Activated CD4-positive, alpha-beta memory T cell treated with anti-CD3 and anti-CD28 coated beads for 36 hours (primary cell): ENCODE measurements at regions of chr6 and their contacts with region 1.

Region 1: GRCh38 chr6:31419842-31420241 is 16.4 kb downstream of the MICA start:
- DNase-seq: no peak
- H3K4me3 Mint-ChIP-seq: no peak overlapping the region
- H3K27ac Mint-ChIP-seq: no peak overlapping the region
- H3K4me1 Mint-ChIP-seq: no peaks in the 10 kb centered on the region
- H3K27me3 Mint-ChIP-seq: no peaks in the 10 kb centered on the region

Region 2: DNA sequence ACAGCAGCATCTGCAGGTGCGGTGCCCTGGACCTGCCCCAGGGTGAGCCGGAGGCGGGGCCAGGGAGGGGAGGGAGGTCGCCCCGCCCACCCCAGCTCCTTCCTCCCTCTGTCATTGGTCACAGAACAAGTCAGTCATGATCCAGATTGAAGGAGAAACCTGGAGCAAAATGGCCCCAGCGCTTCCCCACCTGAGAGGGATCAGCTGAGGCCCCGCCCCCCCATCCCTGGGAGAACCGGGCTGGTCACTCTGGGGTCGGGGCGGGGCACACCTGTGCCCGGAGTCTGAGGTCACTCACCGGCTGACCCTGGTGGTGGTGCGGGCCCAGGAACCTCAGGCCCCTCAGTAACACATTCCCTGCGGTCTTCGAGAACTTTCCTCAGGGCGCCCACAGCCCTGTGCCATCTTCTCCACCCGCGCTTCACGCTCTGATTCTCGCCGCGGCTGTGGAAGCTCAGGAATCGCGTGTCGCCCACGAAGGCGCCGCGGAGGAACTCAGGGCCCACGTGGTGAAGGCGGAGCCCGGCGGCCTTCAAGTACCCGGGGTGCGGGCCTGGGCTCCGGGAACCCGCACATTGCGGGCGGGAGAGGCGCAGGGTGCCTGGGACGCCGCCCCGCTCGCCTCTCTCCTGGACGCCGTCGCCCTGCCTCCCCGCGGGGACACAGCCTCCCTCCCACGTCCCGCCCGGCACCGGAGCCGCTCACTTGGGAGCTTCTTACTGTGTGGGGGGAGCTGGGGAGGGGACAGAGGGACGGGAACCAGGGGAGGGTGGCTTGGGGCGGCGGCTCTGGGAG is 111.6 kb before region 1 on chr6:
- CTCF ChIA-PET with region 1: no interaction called
- POLR2A ChIA-PET with region 1: no interaction called
- intact Hi-C with region 1: no loop called
- DNase-seq: peak; percentile 80
- H3K4me3 Mint-ChIP-seq: peak overlapping the region; percentile 72
- H3K27ac Mint-ChIP-seq: no peak overlapping the region
- H3K4me1 Mint-ChIP-seq: no peaks in the 10 kb centered on the region
- H3K27me3 Mint-ChIP-seq: peaks cover 1% of the 10 kb centered on the region

Region 3: GRCh38 chr6:31375699-31376098 is 44.1 kb before region 1 on chr6:
- CTCF ChIA-PET with region 1: no interaction called
- POLR2A ChIA-PET with region 1: no interaction called
- intact Hi-C with region 1: no loop called
- DNase-seq: no peak
- H3K4me3 Mint-ChIP-seq: no peak overlapping the region
- H3K27ac Mint-ChIP-seq: no peak overlapping the region
- H3K4me1 Mint-ChIP-seq: peaks cover 4% of the 10 kb centered on the region
- H3K27me3 Mint-ChIP-seq: peaks cover 12% of the 10 kb centered on the region

Region 4: DNA sequence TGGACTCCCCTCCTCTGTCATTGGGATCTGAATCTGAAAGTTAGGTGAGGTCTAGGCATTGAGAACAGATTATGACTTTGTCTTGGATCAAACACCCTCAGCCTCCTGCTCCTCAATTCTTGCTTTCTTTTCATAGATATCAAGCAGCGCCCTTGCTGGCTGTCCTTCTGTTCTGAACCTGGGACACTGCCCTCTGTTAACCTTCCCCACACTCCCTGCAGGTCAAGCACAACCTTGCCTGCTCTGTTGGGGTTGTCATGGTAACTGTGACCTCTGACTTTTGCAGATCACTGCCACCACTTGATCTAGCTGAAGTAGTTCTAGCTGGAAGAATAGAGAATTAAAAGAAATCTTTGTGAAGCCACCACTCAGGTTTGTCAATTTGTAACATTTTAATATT is 32.9 kb before region 1 on chr6:
- CTCF ChIA-PET with region 1: no interaction called
- POLR2A ChIA-PET with region 1: no interaction called
- intact Hi-C with region 1: no loop called
- DNase-seq: no peak
- H3K4me3 Mint-ChIP-seq: no peak overlapping the region
- H3K27ac Mint-ChIP-seq: no peak overlapping the region
- H3K4me1 Mint-ChIP-seq: no peaks in the 10 kb centered on the region
- H3K27me3 Mint-ChIP-seq: peaks cover under 1% of the 10 kb centered on the region

Region 5: DNA sequence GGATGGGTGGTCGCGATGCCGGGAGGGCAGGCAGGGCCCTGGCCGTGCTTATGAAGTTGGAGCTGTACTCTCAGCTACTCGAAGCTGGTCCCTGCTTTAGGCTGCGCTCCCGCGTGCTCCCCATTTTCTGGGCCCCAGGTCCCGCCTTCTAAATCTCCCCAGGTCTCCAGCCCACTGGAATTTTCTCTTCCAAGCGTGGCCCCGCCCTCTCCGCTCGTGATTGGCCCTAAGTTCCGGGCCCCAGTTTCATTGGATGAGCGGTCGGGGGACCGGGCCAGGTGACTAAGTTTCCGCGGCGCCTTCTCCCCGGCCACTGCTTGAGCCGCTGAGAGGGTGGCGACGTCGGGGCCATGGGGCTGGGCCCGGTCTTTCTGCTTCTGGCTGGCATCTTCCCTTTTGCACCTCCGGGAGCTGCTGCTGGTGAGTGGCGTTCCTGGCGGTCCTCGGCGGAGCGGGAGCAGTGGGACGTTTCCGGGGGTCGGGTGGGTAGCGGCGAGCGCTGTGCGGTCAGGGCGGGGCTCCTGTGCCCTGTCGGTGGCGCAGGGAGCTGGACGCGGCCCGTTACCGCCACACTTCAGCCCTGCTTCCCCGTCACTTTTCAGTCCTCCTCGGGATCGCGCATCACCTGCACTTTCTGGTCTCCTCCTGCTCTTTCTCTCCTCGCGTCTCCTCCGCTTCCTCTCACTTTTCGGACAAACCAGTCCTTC is 16.4 kb before region 1 on chr6 and contains the start of gene MICA:
- CTCF ChIA-PET with region 1: interaction called, 3 read pairs
- POLR2A ChIA-PET with region 1: no interaction called
- intact Hi-C with region 1: loop called (anchors 2 kb)
- DNase-seq: peak; percentile 84
- H3K4me3 Mint-ChIP-seq: peak within 1 kb of the TSS; percentile 79
- H3K27ac Mint-ChIP-seq: peak within 1 kb of the TSS; percentile 47
- H3K4me1 Mint-ChIP-seq: peaks cover 57% of the 10 kb centered on the region
- H3K27me3 Mint-ChIP-seq: no peaks in the 10 kb centered on the region
- total RNA-seq, gene MICA: 7.1 to 8.6 TPM

Region 6: DNA sequence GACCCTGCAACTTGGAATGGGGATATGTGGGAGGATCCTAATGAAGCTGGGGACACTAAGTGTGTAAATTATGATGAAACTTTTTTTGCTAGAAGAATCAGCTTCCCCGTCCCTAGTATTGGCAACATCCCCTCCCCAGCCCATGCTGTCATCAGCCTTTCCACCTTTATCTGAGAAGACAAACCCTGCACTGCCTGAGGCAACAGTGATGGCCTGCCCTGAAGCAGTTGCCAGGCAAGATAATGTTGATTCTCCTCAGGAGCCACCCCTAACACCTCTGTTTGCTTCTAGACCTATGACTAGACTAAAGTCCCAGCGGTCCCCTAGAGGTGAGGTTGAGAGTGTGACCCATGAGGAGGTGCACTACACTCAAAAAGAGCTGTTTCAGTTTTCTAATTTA is 10.6 kb after region 1 on chr6:
- CTCF ChIA-PET with region 1: no interaction called
- POLR2A ChIA-PET with region 1: no interaction called
- intact Hi-C with region 1: no loop called
- DNase-seq: no peak
- H3K4me3 Mint-ChIP-seq: no peak overlapping the region
- H3K27ac Mint-ChIP-seq: no peak overlapping the region
- H3K4me1 Mint-ChIP-seq: no peaks in the 10 kb centered on the region
- H3K27me3 Mint-ChIP-seq: no peaks in the 10 kb centered on the region